ENCODE measurements at regions of chr16 and their contacts with region 1.

Region 1: DNA sequence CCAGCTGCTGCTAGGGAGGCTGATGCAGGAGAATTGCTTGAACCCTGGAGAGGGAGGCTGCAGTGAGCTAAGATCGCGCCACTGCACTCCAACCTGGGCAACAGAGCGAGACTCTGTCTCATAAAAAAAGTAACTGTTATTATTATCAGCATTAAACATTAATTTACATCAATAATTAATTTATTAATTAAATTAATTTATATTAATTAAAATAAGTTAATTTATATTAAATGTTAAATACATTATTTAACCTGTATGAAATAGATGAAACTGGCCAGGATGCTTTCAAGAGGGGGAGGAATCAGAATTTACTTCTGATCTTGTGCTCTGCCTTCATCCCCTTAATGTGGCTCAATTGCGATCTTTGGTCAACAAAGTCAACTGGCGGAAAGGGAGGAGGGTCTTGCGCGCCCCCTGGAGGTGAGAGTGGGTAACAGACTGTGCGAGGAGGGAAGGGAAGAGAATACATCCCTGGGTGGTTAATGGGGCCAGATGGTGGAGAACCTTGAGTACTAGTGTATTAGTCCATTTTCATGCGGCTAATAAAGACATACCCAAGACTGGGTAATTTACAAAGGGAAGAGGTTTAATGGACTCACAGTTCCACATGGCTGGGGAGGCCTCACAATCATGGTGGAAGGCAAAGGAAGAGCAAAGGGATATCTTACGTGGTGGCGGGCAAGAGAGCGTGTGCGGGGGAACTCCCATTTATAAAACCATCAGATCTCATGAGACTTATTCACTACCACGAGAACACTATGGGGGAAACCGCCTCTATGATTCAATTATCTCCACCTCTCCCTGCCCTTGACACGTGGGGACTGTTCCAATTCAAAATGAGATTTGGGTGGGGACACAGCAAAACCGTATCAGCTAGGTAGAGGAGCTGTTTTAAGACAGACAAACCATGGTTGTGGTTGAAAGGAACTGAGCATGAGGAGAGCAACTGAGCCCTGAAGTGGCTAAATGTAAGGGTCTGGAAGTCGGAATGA is 15.7 kb upstream of the CPPED1 start:
- DNase-seq: peak; percentile 87
- ATAC-seq: no peak

Region 2: DNA sequence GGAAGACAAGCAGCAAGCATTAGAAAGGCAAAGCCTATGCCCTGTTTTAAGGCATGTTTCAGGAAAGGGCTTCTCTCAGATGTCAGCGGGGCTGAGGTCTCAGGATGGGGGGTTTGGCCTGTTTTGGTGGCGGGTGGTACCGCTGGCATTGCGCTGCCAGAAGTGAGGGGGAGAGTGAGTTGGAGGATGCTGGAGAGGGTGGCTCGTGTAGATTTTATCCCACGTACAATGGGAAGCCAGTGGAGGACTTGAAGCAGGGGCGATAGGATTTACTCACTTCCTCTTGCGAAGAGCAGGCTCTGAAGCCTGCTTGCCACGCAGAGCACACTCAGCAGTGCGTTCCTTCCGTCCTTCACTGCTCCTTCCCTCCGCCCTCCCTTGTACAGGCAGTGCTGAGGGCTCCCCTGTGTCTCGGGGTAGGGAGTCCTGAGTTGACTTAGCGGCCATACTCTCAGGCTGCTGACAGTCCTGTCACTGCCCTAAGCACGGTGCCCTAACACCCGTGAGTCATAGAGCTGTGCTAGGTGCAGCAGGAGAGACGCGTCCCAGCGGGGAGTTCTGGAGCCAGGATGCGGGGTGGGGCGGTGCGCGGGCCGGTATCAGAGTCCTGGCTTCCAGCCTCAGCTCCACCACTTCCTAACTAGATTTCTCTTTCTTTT is 729.8 kb before region 1 on chr16:
- intact Hi-C with region 1: loop called (anchors 5 kb)
- DNase-seq: no peak
- ATAC-seq: peak; percentile 57

Region 3: GRCh38 chr16:12455287-12455798 is 364.1 kb before region 1 on chr16:
- intact Hi-C with region 1: loop called (anchors 2 kb)
- DNase-seq: peak; percentile 90
- ATAC-seq: peak; percentile 74

Region 4: GRCh38 chr16:12573730-12574383 is 245.6 kb before region 1 on chr16:
- intact Hi-C with region 1: loop called (anchors 5 kb)
- DNase-seq: no peak
- ATAC-seq: peak; percentile 37